Activated CD4-positive, alpha-beta T cell treated with anti-CD3 and anti-CD28 coated beads for 36 hours (primary cell): ENCODE measurements at regions of chr10 and their contacts with region 1.

Region 1: GRCh38 chr10:57785546-57786284 is 482.0 kb downstream of the IPMK start:
- DNase-seq: no peak
- ATAC-seq: no peak
- H3K4me3 Mint-ChIP-seq: no peak overlapping the region
- H3K27ac Mint-ChIP-seq: no peak overlapping the region
- H3K4me1 Mint-ChIP-seq: no peaks in the 10 kb centered on the region
- H3K27me3 Mint-ChIP-seq: no peaks in the 10 kb centered on the region

Region 2: GRCh38 chr10:57673446-57673960 is 112.2 kb before region 1 on chr10:
- CTCF ChIA-PET with region 1: no interaction called
- POLR2A ChIA-PET with region 1: no interaction called
- intact Hi-C with region 1: no loop called
- DNase-seq: no peak
- ATAC-seq: no peak
- H3K4me3 Mint-ChIP-seq: no peak overlapping the region
- H3K27ac Mint-ChIP-seq: no peak overlapping the region
- H3K4me1 Mint-ChIP-seq: no peaks in the 10 kb centered on the region
- H3K27me3 Mint-ChIP-seq: no peaks in the 10 kb centered on the region

Region 3: DNA sequence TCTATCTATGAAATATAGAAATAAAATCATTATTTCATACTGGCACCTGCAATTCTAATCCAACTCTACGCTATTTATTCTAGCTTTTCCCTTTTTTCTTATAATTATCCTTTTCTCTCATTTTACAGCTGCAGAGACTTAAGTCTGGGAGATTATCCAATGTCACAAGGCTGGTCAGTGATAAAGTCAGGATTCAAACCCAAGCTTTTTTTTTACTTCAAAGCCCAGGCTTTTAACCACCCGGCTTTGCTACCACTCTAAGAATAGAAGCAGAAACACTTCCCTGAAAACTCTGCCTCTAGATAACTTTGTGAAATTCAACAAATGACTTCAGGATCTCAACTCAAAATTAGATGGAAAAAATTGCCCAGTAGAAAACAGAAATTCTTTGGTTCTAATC is 70.5 kb before region 1 on chr10:
- CTCF ChIA-PET with region 1: no interaction called
- POLR2A ChIA-PET with region 1: no interaction called
- intact Hi-C with region 1: no loop called
- DNase-seq: no peak
- ATAC-seq: no peak
- H3K4me3 Mint-ChIP-seq: no peak overlapping the region
- H3K27ac Mint-ChIP-seq: no peak overlapping the region
- H3K4me1 Mint-ChIP-seq: no peaks in the 10 kb centered on the region
- H3K27me3 Mint-ChIP-seq: no peaks in the 10 kb centered on the region

Region 4: DNA sequence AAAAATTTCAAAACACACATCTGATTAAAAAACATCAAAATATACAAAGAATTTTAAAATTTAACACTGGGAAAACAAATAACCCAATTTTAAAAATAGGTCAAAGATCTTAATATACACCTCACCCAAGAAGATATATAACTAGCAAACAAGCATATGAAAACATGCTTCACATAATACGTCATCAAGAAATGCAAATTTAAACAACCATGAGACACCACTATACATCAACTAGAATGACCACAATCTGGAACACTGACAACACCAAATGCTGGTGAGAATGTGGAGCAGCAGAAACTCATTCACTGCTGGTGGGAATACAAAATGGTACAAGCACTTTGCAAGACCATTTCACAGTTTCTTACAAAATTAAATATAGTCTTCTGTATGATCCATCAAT is 16.4 kb before region 1 on chr10:
- CTCF ChIA-PET with region 1: no interaction called
- POLR2A ChIA-PET with region 1: no interaction called
- intact Hi-C with region 1: loop called in 1 of 2 experiments (anchors 2 kb)
- DNase-seq: no peak
- ATAC-seq: no peak
- H3K4me3 Mint-ChIP-seq: no peak overlapping the region
- H3K27ac Mint-ChIP-seq: no peak overlapping the region
- H3K4me1 Mint-ChIP-seq: no peaks in the 10 kb centered on the region
- H3K27me3 Mint-ChIP-seq: no peaks in the 10 kb centered on the region

Region 5: GRCh38 chr10:57799625-57800024 is 13.9 kb after region 1 on chr10:
- CTCF ChIA-PET with region 1: no interaction called
- POLR2A ChIA-PET with region 1: no interaction called
- intact Hi-C with region 1: no loop called
- DNase-seq: no peak
- ATAC-seq: no peak
- H3K4me3 Mint-ChIP-seq: no peak overlapping the region
- H3K27ac Mint-ChIP-seq: no peak overlapping the region
- H3K4me1 Mint-ChIP-seq: no peaks in the 10 kb centered on the region
- H3K27me3 Mint-ChIP-seq: no peaks in the 10 kb centered on the region